Naive thymus-derived CD4-positive, alpha-beta T cell (primary cell): ENCODE measurements at regions of chr11 and their contacts with region 1.

Region 1: DNA sequence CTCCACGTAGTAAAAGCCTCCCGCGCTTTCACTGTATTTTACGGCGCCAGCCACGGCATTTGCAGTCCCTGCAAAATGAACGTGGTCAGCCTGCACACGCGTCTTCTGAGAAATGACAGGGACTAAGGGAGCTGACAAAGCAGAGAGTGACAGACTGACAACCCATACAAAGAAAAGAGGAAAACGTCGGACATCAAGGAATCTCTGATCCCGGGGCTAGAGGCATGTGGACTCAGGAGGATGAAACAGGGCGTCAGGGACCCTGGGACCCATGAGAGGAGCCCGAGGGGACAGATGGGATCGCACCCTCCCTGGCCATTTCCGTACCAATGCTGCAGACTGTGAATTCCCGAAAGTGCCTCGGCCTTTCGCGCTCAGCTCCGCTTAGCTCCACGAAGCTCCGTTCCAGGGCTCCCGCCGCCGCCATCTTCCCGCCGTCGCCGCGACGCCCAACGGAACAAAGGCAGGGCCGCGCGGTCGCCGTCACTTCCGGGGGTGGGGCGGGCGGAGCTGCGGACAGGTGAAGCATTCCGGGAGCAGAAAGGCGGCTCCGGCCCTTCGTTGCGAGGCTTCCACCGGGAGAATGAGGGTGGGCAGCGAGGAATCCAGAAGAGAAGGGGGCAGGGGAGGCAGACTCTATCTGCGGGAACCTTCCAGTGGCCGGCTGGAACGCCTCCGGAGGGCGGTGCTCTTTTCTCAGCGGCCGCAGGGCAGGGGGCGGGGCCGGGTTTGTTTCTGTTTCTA is at the start of gene NUP160:
- DNase-seq: peak; percentile 78 to 92 (median 85)
- ATAC-seq: peak; percentile 92
- H3K4me3 ChIP-seq: peak within 1 kb of the TSS; percentile 88
- H3K4me3 Mint-ChIP-seq: peak within 1 kb of the TSS; percentile 88 to 100 (median 98)
- H3K27ac ChIP-seq: peak within 1 kb of the TSS; percentile 97
- H3K27ac Mint-ChIP-seq: peak within 1 kb of the TSS; percentile 72 to 100 (median 98)
- H3K4me1 ChIP-seq: peaks cover 12 to 66% of the 10 kb centered on the region in 2 donors
- H3K4me1 Mint-ChIP-seq: peaks cover 38 to 71% (median 62%) of the 10 kb centered on the region in 7 donors
- H3K27me3 ChIP-seq: no peaks in the 10 kb centered on the region
- H3K27me3 Mint-ChIP-seq: peaks cover 0 to 2% (median 0%) of the 10 kb centered on the region in 5 donors
- total RNA-seq, gene NUP160: 53.9 to 68.0 (median 65.5) TPM

Region 2: GRCh38 chr11:46936138-46937110 is 911.6 kb before region 1 on chr11 and contains the start of gene CSTPP1:
- CTCF ChIA-PET with region 1: no interaction called
- POLR2A ChIA-PET with region 1: no interaction called
- intact Hi-C with region 1: loop called in 1 of 2 experiments (anchors 2 kb)
- DNase-seq: peak; percentile 80 to 92 (median 89)
- ATAC-seq: peak; percentile 99
- H3K4me3 ChIP-seq: peak within 1 kb of the TSS; percentile 76
- H3K4me3 Mint-ChIP-seq: peak within 1 kb of the TSS; percentile 86 to 100 (median 92)
- H3K27ac ChIP-seq: peak within 1 kb of the TSS; percentile 72
- H3K27ac Mint-ChIP-seq: peak within 1 kb of the TSS; percentile 89 to 98 (median 92)
- H3K4me1 ChIP-seq: peaks cover 0 to 11% of the 10 kb centered on the region in 2 donors
- H3K4me1 Mint-ChIP-seq: peaks cover 5 to 24% (median 21%) of the 10 kb centered on the region in 7 donors
- H3K27me3 ChIP-seq: no peaks in the 10 kb centered on the region
- H3K27me3 Mint-ChIP-seq: peaks cover 8 to 19% (median 9%) of the 10 kb centered on the region in 5 donors
- total RNA-seq, gene CSTPP1: 9.3 to 18.6 (median 16.1) TPM

Region 3: GRCh38 chr11:47578524-47579460 is 269.3 kb before region 1 on chr11 and contains the starts of genes KBTBD4 and NDUFS3:
- CTCF ChIA-PET with region 1: no interaction called
- POLR2A ChIA-PET with region 1: interaction called, 4 read pairs
- intact Hi-C with region 1: loop called in 1 of 2 experiments (anchors 5 kb)
- DNase-seq: peak; percentile 85 to 95 (median 88)
- ATAC-seq: peak; percentile 97
- H3K4me3 ChIP-seq: peak within 1 kb of the TSS; percentile 95
- H3K4me3 Mint-ChIP-seq: peak within 1 kb of the TSS; percentile 95 to 100 (median 99)
- H3K27ac ChIP-seq: peak within 1 kb of the TSS; percentile 80
- H3K27ac Mint-ChIP-seq: peak within 1 kb of the TSS; percentile 97 to 100 (median 99)
- H3K4me1 ChIP-seq: peaks cover 26 to 28% of the 10 kb centered on the region in 2 donors
- H3K4me1 Mint-ChIP-seq: peaks cover 17 to 51% (median 41%) of the 10 kb centered on the region in 7 donors
- H3K27me3 ChIP-seq: no peaks in the 10 kb centered on the region
- H3K27me3 Mint-ChIP-seq: no peaks in the 10 kb centered on the region
- total RNA-seq, gene KBTBD4: 15.0 to 26.5 (median 20.9) TPM
- total RNA-seq, gene NDUFS3: 68.6 to 116 (median 85.2) TPM

Region 4: DNA sequence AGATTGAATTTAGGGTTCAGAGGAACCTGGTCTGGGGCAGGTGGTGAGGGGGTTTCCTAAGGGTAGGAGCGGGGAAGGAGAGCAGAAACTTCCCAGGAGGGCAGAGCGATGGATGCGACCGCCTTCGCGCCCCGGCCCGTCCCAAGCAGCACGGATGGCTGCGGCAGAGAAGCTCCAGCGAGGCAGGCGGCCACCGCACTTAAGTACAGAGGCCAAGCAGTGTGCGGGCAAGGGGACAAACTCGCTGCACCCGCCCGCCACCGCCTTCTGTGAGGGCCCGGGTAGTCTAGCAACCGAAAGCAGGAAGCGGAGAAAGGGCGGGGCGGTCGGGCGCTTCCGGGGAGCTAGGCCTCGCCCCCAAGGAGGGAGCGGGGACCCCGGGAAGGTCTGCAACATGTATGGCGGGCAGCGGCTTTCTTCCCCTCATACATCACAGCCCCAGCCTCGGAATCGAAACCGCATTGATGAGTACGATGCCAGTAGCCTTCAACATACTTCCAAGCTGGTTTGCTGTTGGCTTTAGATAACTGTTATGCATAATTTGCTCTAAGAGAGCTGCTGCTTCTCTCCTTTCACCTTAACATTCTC is 132.9 kb before region 1 on chr11 and contains the start of gene AGBL2:
- CTCF ChIA-PET with region 1: interaction called, 3 read pairs
- POLR2A ChIA-PET with region 1: no interaction called
- intact Hi-C with region 1: loop called (anchors 5 kb)
- DNase-seq: peak; percentile 61 to 85 (median 82)
- ATAC-seq: peak; percentile 99
- H3K4me3 ChIP-seq: peak within 1 kb of the TSS; percentile 94
- H3K4me3 Mint-ChIP-seq: peak within 1 kb of the TSS; percentile 95 to 99 (median 97)
- H3K27ac ChIP-seq: peak within 1 kb of the TSS; percentile 84
- H3K27ac Mint-ChIP-seq: peak within 1 kb of the TSS; percentile 96 to 99 (median 98)
- H3K4me1 ChIP-seq: peaks cover 7 to 15% of the 10 kb centered on the region in 2 donors
- H3K4me1 Mint-ChIP-seq: peaks cover 0 to 22% (median 15%) of the 10 kb centered on the region in 7 donors
- H3K27me3 ChIP-seq: no peaks in the 10 kb centered on the region
- H3K27me3 Mint-ChIP-seq: no peaks in the 10 kb centered on the region
- total RNA-seq, gene AGBL2: 4.7 to 11.3 (median 8.1) TPM

Region 5: GRCh38 chr11:47819743-47820142 is 28.3 kb before region 1 on chr11:
- CTCF ChIA-PET with region 1: no interaction called
- POLR2A ChIA-PET with region 1: interaction called, 3 read pairs
- intact Hi-C with region 1: loop called in 1 of 2 experiments (anchors 5 kb)
- DNase-seq: no peak
- ATAC-seq: no peak
- H3K4me3 ChIP-seq: no peak overlapping the region
- H3K4me3 Mint-ChIP-seq: no peak overlapping the region
- H3K27ac ChIP-seq: no peak overlapping the region
- H3K27ac Mint-ChIP-seq: peak overlapping the region in 5 of 9 donors; percentile 18 to 62 (median 43)
- H3K4me1 ChIP-seq: no peaks in the 10 kb centered on the region
- H3K4me1 Mint-ChIP-seq: no peaks in the 10 kb centered on the region
- H3K27me3 ChIP-seq: no peaks in the 10 kb centered on the region
- H3K27me3 Mint-ChIP-seq: no peaks in the 10 kb centered on the region

Region 6: GRCh38 chr11:47881145-47881544 is 33.1 kb after region 1 on chr11:
- CTCF ChIA-PET with region 1: no interaction called
- POLR2A ChIA-PET with region 1: no interaction called
- intact Hi-C with region 1: no loop called
- DNase-seq: no peak
- ATAC-seq: no peak
- H3K4me3 ChIP-seq: no peak overlapping the region
- H3K4me3 Mint-ChIP-seq: no peak overlapping the region
- H3K27ac ChIP-seq: no peak overlapping the region
- H3K27ac Mint-ChIP-seq: no peak overlapping the region
- H3K4me1 ChIP-seq: peaks cover 0 to 18% of the 10 kb centered on the region in 2 donors
- H3K4me1 Mint-ChIP-seq: peaks cover 9 to 31% (median 27%) of the 10 kb centered on the region in 7 donors
- H3K27me3 ChIP-seq: no peaks in the 10 kb centered on the region
- H3K27me3 Mint-ChIP-seq: peaks cover 0 to 6% (median 0%) of the 10 kb centered on the region in 5 donors

Region 7: DNA sequence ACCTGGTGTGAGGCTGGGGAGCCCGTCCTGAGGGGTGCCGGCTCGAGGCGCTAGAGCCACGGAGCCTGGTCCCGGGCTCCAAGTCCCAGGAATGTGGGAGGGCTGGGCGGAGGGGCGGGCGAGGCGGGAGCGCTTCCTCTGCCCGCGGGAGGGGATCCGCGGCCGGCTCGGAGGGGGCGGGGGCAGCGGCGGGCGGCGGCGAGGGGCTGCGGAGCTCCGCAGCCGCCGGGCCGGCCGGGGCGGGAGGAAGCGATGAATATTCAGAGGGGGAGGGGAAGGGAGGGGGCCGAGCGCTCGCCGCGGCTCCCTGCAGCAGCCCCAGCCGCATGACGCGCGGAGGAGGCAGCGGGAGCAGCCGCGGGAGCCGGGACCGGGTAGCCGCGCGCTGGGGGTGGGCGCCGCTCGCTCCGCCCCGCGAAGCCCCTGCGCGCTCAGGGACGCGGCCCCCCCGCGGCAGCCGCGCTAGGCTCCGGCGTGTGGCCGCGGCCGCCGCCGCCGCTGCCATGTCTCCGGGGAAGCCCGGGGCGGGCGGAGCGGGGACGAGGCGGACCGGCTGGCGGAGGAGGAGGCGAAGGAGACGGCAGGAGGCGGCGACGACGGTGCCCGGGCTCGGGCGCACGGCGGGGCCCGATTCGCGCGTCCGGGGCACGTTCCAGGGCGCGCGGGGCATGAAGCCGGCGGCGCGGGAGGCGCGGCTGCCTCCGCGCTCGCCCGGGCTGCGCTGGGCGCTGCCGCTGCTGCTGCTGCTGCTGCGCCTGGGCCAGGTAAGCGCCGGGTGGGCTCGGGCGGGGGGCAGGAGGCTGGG is 132.4 kb after region 1 on chr11 and contains the start of gene PTPRJ:
- CTCF ChIA-PET with region 1: no interaction called
- POLR2A ChIA-PET with region 1: interaction called, 5 read pairs
- intact Hi-C with region 1: loop called in 1 of 2 experiments (anchors 5 kb)
- DNase-seq: peak; percentile 46 to 75 (median 66)
- ATAC-seq: peak; percentile 85
- H3K4me3 ChIP-seq: peak within 1 kb of the TSS; percentile 67
- H3K4me3 Mint-ChIP-seq: peak within 1 kb of the TSS; percentile 77 to 95 (median 90)
- H3K27ac ChIP-seq: peak within 1 kb of the TSS; percentile 79
- H3K27ac Mint-ChIP-seq: peak within 1 kb of the TSS; percentile 12 to 86 (median 64)
- H3K4me1 ChIP-seq: peaks cover 25% of the 10 kb centered on the region in 2 donors
- H3K4me1 Mint-ChIP-seq: peaks cover 29 to 37% (median 35%) of the 10 kb centered on the region in 7 donors
- H3K27me3 ChIP-seq: no peaks in the 10 kb centered on the region
- H3K27me3 Mint-ChIP-seq: peaks cover 0 to 19% (median 0%) of the 10 kb centered on the region in 5 donors
- total RNA-seq, gene PTPRJ: 31.8 to 82.3 (median 53.9) TPM

Region 8: DNA sequence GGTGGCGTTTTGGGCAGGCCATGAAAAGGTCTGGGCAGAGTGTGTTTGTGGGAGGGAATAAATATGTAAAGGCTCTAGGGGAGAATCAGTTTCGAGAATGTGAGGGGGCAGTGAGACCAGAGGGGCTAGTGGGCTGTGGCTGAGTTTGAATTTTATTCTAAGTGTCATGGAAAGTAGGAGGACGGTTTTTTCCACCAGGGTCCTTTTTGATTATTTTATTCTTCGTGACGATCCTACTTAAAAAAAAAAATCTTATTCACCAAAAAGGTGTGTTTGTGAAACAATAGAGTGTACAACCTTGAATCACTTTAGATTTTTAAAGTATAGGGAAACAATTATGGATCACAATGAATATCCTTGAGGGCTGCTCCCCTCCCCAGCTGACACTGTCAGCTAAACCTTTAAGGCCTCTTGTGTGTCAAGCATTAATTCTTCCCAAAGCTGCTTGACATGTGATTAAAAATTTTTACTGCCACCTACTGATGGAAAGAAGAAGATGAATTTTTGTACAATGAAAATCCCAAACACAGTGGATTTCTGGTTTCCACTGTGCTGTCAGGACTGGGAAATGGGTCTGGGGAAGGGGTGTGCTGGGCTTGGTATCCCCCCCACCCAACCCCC is 261.1 kb after region 1 on chr11:
- CTCF ChIA-PET with region 1: interaction called, 5 read pairs
- POLR2A ChIA-PET with region 1: no interaction called
- intact Hi-C with region 1: loop called (anchors 1 to 2 kb)
- DNase-seq: peak in 6 of 9 donors; percentile 20 to 50 (median 32)
- ATAC-seq: peak; percentile 57
- H3K4me3 ChIP-seq: peak overlapping the region; percentile 26
- H3K4me3 Mint-ChIP-seq: peak overlapping the region; percentile 38 to 86 (median 76)
- H3K27ac ChIP-seq: peak overlapping the region; percentile 30
- H3K27ac Mint-ChIP-seq: peak overlapping the region in 8 of 9 donors; percentile 14 to 90 (median 80)
- H3K4me1 ChIP-seq: peaks cover 18 to 27% of the 10 kb centered on the region in 2 donors
- H3K4me1 Mint-ChIP-seq: peaks cover 32 to 59% (median 49%) of the 10 kb centered on the region in 7 donors
- H3K27me3 ChIP-seq: no peaks in the 10 kb centered on the region
- H3K27me3 Mint-ChIP-seq: no peaks in the 10 kb centered on the region